Psoas muscle (tissue), 8 donors: ENCODE measurements at regions of chr4 and their contacts with region 1.

Region 1: DNA sequence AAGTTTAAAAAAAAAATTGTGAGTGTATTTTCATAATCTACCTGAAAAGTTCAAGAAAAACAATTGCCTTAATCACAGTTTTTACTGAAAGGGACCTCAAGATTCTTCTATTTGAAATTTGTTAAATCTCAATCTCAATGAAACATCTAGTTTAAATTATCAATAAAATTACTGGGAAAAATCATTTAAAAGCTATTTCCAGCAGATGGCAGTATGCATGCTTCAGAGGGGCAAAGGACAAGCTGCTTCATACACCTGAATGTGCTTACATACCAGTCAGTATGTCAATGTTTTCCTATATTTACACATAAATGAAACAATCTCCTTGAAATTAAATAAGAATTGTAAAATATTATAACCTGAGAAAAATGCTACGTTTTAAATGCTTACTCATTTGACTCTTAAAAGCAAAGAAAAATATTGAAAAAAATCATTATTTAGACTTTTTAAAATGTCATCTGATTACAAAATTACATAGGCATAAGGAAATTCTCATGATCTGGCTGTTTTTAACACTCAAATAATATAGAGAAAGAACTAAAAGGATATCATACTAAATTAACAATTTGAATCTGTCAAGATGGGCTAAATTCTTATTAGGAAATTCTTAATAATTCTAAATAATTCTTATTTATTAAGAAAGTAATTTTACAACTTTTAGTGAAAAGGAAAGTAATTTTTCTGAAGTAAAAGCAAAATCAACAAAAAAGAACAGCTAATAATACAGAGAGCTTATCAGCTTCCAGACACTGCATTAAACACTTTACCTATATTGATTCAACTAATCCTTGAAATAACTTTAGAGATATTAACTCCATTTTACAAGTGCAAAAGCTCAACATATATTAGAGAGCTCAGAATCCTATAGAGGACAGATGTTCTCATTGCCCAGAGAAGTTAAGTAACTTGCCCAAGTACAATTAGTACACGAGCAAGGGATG is 242.1 kb downstream of the ADAMTS3 start:
- DNase-seq: no peak
- ATAC-seq: no peak
- H3K4me3 ChIP-seq: no peak overlapping the region
- H3K27ac ChIP-seq: no peak overlapping the region
- H3K4me1 ChIP-seq: no peaks in the 10 kb centered on the region
- H3K27me3 ChIP-seq: peaks cover 0 to 2% (median 0%) of the 10 kb centered on the region in 3 donors
- CTCF ChIP-seq: peak; percentile 56

Region 2: GRCh38 chr4:72468904-72469502 is 142.0 kb after region 1 on chr4:
- intact Hi-C with region 1: loop called in 1 of 2 experiments (anchors 2 kb)
- DNase-seq: no peak
- ATAC-seq: no peak
- H3K4me3 ChIP-seq: no peak overlapping the region
- H3K27ac ChIP-seq: no peak overlapping the region
- H3K4me1 ChIP-seq: no peaks in the 10 kb centered on the region
- H3K27me3 ChIP-seq: no peaks in the 10 kb centered on the region
- CTCF ChIP-seq: peak; percentile 57